ENCODE measurements at regions of chr21 and their contacts with region 1.

Region 1: GRCh38 chr21:46458315-46459023 is at the start of gene DIP2A:
- DNase-seq: peak; percentile 96
- ATAC-seq: peak; percentile 98
- H3K4me3 Mint-ChIP-seq: peak within 1 kb of the TSS; percentile 90
- H3K27ac Mint-ChIP-seq: peak within 1 kb of the TSS; percentile 89
- H3K4me1 Mint-ChIP-seq: peaks cover 44% of the 10 kb centered on the region
- H3K27me3 Mint-ChIP-seq: no peaks in the 10 kb centered on the region
- total RNA-seq, gene DIP2A: 53.7 to 53.9 TPM

Region 2: DNA sequence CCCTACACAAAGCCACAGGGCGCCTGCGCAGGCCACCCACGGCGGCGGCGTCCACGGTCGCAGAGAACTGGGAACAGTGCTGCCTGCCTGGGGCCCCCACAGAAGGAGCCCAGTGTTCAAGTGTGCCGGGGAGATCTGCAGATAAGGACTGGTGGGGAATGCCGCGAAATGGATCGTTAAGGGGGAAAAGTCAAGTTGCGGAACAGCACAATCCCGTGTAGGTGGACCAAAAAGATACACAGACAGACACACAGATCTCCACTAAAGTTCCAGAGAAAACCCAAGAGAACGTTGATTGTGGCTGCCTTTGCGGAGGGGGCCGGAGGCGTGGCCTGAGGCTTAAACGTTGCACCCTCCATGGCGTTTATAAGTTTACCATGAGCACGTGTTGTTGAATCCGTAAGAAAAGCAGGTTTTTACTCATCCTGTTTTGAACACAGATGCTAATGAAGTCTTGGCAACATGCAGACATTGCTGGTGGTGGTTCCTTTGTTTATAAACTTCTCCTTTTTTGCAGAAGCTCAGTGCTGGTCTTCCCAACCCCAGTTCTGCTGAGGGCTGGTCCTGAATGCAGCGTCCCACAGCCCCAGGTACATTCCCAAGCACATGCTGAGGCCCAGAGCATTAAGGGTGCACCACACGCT is 278.3 kb before region 1 on chr21:
- CTCF ChIA-PET with region 1: no interaction called
- POLR2A ChIA-PET with region 1: no interaction called
- DNase-seq: no peak
- ATAC-seq: no peak
- H3K4me3 Mint-ChIP-seq: no peak overlapping the region
- H3K27ac Mint-ChIP-seq: no peak overlapping the region
- H3K4me1 Mint-ChIP-seq: peaks cover 11% of the 10 kb centered on the region
- H3K27me3 Mint-ChIP-seq: peaks cover 10% of the 10 kb centered on the region

Region 3: DNA sequence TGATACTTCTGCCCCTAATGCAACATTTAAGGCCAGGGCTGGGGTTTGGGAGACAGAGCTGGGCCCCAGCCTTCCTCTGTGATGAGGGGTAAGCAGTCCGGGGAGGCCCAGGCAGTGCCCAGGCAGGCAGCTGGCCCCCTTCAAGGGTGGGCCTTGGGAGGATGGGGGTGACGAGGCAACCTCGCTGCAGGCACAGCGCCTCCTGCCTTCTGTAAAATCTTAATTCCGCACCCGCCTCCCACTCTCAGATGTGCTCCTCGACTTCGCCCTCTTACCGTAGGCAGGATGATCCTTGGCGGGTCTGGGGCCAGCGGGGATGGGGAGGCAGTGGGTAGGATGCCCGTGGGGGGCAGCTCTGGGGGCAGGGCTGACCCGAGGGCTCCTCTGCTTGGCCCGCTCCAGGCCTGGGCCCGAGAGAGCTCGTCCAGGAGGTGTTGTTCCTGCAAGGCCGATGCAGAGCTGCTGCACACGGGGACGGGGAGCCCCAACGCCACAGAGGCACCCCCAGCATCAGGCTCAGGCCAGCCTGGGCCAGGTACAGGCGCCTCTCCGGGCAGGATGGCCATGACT is 143.9 kb before region 1 on chr21:
- CTCF ChIA-PET with region 1: no interaction called
- POLR2A ChIA-PET with region 1: no interaction called
- DNase-seq: no peak
- ATAC-seq: no peak
- H3K4me3 Mint-ChIP-seq: no peak overlapping the region
- H3K27ac Mint-ChIP-seq: no peak overlapping the region
- H3K4me1 Mint-ChIP-seq: peaks cover 6% of the 10 kb centered on the region
- H3K27me3 Mint-ChIP-seq: no peaks in the 10 kb centered on the region

Region 4: DNA sequence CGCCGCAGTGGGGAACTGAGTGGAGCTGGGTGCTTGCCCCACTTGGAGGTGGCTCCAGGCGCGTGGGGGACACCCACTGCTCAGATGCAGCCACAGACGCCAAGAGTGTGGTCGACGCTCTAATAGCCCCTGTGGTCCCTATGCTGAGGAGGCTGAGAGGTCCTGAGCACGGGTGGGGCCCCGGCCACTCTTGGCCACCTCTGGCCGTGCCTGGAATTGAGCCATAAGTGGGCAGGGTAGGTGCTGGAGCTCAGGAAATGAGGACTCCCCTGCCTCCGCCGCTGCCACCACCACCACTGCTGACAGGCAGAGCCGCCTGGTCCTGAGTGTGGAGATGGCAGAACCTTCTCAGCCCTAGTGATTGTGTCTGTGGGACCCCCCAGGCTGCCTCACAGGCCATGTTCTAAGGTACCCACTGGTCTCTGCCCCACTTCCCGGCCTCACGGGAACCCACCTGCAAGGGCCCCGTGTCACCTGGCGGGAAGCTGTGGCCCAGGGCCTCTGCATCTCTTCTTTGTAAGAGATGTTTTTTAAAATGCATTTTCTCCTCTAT is 34.4 kb before region 1 on chr21:
- CTCF ChIA-PET with region 1: interaction called, 4 read pairs
- POLR2A ChIA-PET with region 1: interaction called, 16 read pairs
- DNase-seq: peak; percentile 55
- ATAC-seq: peak; percentile 60
- H3K4me3 Mint-ChIP-seq: peak overlapping the region; percentile 72
- H3K27ac Mint-ChIP-seq: peak overlapping the region; percentile 100
- H3K4me1 Mint-ChIP-seq: peaks cover 32% of the 10 kb centered on the region
- H3K27me3 Mint-ChIP-seq: no peaks in the 10 kb centered on the region

Region 5: GRCh38 chr21:46448108-46448507 is 10.4 kb before region 1 on chr21:
- CTCF ChIA-PET with region 1: no interaction called
- POLR2A ChIA-PET with region 1: interaction called, 14 read pairs
- DNase-seq: no peak
- ATAC-seq: no peak
- H3K4me3 Mint-ChIP-seq: no peak overlapping the region
- H3K27ac Mint-ChIP-seq: no peak overlapping the region
- H3K4me1 Mint-ChIP-seq: peaks cover 7% of the 10 kb centered on the region
- H3K27me3 Mint-ChIP-seq: no peaks in the 10 kb centered on the region

Region 6: DNA sequence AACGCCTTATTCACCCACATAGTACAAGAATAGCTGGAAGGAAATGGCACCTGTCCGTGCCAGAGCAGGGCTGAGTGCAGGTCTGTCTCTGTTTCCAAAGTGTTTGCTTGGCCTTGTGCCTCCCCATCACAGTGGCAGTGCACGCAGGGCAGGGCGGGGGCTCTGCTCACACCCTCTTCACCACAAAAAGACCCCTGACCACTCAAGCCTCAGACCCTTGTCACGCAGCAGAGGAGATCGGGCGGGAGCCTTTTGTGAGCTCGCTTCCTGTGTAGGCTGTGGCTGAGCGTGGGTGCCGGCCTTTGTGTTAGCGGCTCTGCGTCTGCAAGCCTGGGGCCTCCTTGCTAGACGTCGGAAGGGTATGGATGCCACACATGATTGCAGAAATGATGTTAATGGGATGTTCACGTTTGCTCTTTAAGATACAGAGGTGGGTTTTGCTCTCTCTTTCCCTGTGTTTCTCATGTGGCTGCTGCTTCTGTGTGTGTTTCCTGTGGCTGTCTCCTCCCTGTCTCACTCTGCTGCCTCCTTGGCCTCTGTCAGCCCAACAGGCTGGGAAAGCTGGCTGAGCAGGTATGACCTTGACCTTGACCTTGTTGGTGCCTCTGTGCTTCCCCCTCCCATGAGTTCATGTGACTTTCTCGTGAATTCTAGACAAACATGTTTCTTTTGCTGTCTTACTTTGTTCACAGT is 101.0 kb after region 1 on chr21:
- CTCF ChIA-PET with region 1: no interaction called
- POLR2A ChIA-PET with region 1: interaction called, 14 read pairs
- DNase-seq: peak; percentile 77
- ATAC-seq: peak; percentile 84
- H3K4me3 Mint-ChIP-seq: peak overlapping the region; percentile 72
- H3K27ac Mint-ChIP-seq: peak overlapping the region; percentile 97
- H3K4me1 Mint-ChIP-seq: peaks cover 57% of the 10 kb centered on the region
- H3K27me3 Mint-ChIP-seq: no peaks in the 10 kb centered on the region